ENCODE measurements at regions of chr3 and their contacts with region 1.

Region 1: GRCh38 chr3:193592944-193593667 is at the start of gene OPA1:
- DNase-seq: peak; percentile 90 to 99 (median 96)

Region 2: GRCh38 chr3:194671900-194672808 is 1079.0 kb after region 1 on chr3 and contains the start of gene LSG1:
- intact Hi-C with region 1: loop called (anchors 5 kb)
- DNase-seq: peak; percentile 83 to 97 (median 92)

Measured in head of caudate nucleus (tissue), 42 donors.